Sigmoid colon (tissue), 7 donors: ENCODE measurements at regions of chr3 and their contacts with region 1.

Region 1: DNA sequence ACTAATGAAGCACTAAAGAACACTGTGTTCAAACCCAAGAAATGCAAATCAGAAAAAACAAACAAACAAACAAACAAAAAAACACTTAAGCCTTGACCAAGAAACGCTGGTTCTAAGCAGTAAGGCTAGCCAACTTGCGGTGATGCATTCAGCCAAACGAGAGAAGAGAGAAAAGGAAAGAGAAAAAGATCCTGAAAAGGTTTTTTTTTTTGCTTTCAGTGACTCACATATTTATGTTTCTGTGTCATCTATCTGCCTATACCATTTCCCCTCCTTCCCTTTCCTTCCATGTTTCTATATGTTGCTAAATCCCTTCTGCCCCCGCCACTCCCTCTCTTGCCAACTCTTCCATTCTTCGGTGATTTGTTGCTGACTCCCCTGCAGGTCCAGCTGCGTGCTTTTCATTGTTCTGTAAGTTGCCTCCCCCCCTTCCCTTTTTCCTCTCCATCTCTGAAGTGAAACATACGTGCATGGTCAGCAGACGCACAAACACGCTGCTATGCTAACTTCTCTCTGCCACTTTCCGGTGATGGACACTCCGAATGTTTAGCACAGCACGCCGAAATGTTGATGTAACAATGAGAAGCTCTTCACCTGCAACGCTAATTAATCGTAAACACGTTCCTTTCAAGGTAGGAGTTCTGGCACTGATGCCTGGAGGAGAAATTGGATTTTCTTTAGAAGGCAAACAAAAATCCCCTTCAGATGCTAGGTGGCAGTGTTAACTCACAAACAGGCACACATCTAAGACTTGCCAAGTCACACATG is 154.4 kb downstream of the TUSC7 start:
- DNase-seq: no peak
- H3K4me3 ChIP-seq: peak overlapping the region; percentile 26 to 48 (median 39)
- H3K27ac ChIP-seq: no peak overlapping the region
- H3K4me1 ChIP-seq: peaks cover 0 to 24% (median 11%) of the 10 kb centered on the region in 4 donors
- H3K27me3 ChIP-seq: no peaks in the 10 kb centered on the region
- CTCF ChIP-seq: peak in 2 of 4 experiments; percentile 38 to 54
- EP300 ChIP-seq: no peak
- POLR2A ChIP-seq: no peak

Region 2: DNA sequence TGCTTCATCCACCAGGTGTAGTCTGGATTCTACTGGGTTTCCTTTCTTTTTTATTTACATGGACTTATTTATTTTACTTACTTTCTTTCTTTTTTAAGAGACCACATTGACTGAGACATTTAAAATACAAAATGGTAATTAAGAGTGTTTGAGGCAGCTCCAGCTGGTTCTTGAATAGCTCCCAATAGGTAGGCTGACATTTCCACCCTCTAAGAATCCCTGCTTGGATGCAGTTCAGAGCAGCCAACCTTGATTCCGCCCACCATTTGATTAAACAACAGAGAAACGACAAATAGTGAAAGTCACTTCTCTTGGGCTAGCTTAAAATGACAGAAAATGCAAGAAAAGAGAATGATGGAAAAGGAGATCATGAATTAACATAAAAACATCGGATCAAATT is 116.1 kb after region 1 on chr3:
- intact Hi-C with region 1: no loop called
- DNase-seq: no peak
- H3K4me3 ChIP-seq: no peak overlapping the region
- H3K27ac ChIP-seq: no peak overlapping the region
- H3K4me1 ChIP-seq: no peaks in the 10 kb centered on the region
- H3K27me3 ChIP-seq: no peaks in the 10 kb centered on the region
- CTCF ChIP-seq: no peak
- EP300 ChIP-seq: no peak
- POLR2A ChIP-seq: no peak

Region 3: DNA sequence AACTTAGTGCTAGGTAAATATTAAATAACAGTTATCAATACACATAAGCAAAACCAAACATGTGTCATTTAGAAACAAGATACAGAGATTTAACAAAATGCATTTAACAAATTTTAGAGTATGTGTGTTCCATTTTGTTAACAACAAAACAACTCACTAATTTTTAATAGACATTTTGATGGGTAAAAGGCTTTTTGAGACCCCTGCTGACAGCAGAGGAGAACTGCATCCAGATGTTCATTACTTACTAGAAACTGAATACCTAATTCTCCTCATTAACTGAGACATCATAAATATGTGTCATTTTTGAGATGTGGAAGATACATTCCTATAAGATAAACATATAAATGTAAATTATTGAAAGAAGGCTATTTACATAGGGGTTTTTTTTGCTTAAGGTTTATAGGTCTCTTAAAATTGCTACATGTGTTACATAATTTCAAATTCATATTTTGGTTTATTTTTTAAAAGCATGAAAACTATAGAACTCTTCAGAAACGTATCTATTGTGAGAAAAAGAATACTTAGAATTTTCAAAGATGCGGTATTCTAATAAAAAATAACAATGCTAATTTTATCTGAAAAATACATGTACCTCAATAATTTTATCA is 855.4 kb after region 1 on chr3:
- intact Hi-C with region 1: loop called (anchors 5 kb)
- DNase-seq: no peak
- H3K4me3 ChIP-seq: no peak overlapping the region
- H3K27ac ChIP-seq: no peak overlapping the region
- H3K4me1 ChIP-seq: no peaks in the 10 kb centered on the region
- H3K27me3 ChIP-seq: no peaks in the 10 kb centered on the region
- CTCF ChIP-seq: peak; percentile 28 to 78 (median 60)
- EP300 ChIP-seq: no peak
- POLR2A ChIP-seq: no peak

Region 4: DNA sequence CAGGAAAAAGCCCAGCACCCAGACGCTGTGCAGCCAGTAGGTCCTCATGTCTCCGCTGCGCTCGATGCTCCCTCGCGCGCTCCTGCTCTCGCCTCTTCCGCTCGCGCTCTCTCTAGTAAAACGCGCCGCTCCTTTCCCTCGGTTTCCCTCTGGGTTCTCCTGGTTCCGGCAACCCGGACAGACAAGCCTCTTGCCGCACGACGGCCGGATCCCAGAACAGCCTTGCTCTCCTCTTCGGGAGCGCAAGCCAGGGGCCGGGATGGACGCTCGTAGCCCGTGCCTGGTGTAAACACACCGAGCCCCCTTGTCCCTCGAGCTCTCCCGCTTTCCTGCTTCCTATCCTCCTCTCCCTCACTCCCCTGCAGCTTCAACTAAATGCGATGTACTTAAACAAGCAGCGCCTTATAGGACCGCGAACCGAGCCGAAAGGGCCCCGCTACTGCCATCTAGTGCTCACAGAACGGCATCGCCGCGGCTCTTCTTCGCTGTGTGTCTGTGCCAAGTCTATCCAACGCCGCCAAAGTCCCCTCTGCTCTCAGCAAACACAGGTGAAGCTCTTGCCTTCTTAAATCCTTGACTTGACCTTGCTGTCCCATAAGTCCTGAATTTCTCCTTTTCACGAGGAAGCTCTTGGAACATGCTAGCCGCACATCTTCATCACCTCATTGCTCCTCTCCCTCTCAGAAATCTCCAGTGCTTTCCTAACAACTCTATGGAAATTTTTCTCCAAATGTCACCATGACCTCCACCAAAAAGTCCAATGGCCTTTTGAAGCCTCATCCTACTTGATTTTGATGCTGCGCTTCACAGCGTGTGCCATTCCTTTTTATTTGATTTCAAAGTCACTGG is 1133.4 kb after region 1 on chr3:
- intact Hi-C with region 1: loop called (anchors 5 kb)
- DNase-seq: peak; percentile 90
- H3K4me3 ChIP-seq: peak overlapping the region; percentile 41 to 67 (median 58)
- H3K27ac ChIP-seq: peak overlapping the region in 3 of 4 donors; percentile 58 to 75 (median 63)
- H3K4me1 ChIP-seq: peaks cover 0 to 9% (median 4%) of the 10 kb centered on the region in 4 donors
- H3K27me3 ChIP-seq: peaks cover 0 to 6% (median 0%) of the 10 kb centered on the region in 3 donors
- CTCF ChIP-seq: peak; percentile 58 to 87 (median 68)
- EP300 ChIP-seq: no peak
- POLR2A ChIP-seq: no peak

Region 5: DNA sequence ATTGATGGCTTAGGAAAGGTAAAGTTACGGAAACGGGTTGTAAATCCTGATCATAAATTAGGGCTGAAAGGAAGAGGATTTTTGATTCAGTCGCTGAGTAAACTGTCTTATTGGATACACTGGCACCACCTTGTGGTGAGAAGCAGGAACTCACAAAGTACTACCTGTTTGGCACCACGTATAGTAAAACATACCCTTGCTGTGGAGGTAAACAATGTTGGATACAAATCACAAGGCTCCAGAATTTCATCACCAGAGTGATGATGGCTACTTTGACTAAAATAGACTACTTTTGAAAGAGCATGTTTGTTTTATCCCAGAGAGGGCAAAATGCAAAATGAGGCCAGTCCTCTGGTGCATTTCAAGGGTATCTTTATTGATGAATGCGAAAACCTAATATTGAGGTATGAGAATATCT is 1953.8 kb after region 1 on chr3:
- intact Hi-C with region 1: loop called (anchors 10 kb)
- DNase-seq: no peak
- H3K4me3 ChIP-seq: no peak overlapping the region
- H3K27ac ChIP-seq: no peak overlapping the region
- H3K4me1 ChIP-seq: no peaks in the 10 kb centered on the region
- H3K27me3 ChIP-seq: no peaks in the 10 kb centered on the region
- CTCF ChIP-seq: peak in 3 of 4 experiments; percentile 35 to 69 (median 39)
- EP300 ChIP-seq: no peak
- POLR2A ChIP-seq: no peak